ENCODE measurements at regions of chr9 and their contacts with region 1.

Region 1: GRCh38 chr9:112505607-112506006 is 19.0 kb downstream of the KIAA1958 start:
- DNase-seq: no peak
- ATAC-seq: no peak
- H3K4me3 Mint-ChIP-seq: no peak overlapping the region
- H3K27ac Mint-ChIP-seq: no peak overlapping the region
- H3K4me1 Mint-ChIP-seq: no peaks in the 10 kb centered on the region
- H3K27me3 Mint-ChIP-seq: no peaks in the 10 kb centered on the region

Region 2: GRCh38 chr9:112012026-112012902 is 493.3 kb before region 1 on chr9:
- CTCF ChIA-PET with region 1: no interaction called
- POLR2A ChIA-PET with region 1: no interaction called
- intact Hi-C with region 1: no loop called
- DNase-seq: peak; percentile 43
- ATAC-seq: peak; percentile 97
- H3K4me3 Mint-ChIP-seq: no peak overlapping the region
- H3K27ac Mint-ChIP-seq: peak overlapping the region; percentile 27
- H3K4me1 Mint-ChIP-seq: peaks cover 34% of the 10 kb centered on the region
- H3K27me3 Mint-ChIP-seq: peaks cover 17% of the 10 kb centered on the region

Region 3: DNA sequence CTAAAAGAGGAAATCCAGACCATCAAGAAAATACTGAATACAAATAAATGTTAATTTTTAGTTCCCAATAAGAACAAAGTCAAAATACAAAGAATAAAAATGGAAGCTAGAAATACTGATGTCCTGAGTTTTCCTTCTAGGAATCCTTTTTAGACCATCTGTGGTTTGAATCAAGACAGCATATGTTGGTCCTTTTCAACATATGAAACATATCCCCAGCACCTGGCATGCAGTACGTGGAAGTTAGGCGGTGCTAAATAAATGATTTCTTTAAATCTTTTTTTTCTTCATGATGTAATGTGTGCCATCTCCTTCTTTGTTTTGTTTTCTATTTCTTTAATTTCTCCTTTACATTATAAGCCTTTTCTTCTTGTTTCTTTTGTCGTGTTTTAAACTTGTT is 15.0 kb after region 1 on chr9:
- CTCF ChIA-PET with region 1: interaction called, 10 read pairs
- POLR2A ChIA-PET with region 1: no interaction called
- intact Hi-C with region 1: no loop called
- DNase-seq: no peak
- ATAC-seq: no peak
- H3K4me3 Mint-ChIP-seq: no peak overlapping the region
- H3K27ac Mint-ChIP-seq: no peak overlapping the region
- H3K4me1 Mint-ChIP-seq: no peaks in the 10 kb centered on the region
- H3K27me3 Mint-ChIP-seq: no peaks in the 10 kb centered on the region